CD4-positive, alpha-beta memory T cell (primary cell): ENCODE measurements at regions of chr19 and their contacts with region 1.

Region 1: DNA sequence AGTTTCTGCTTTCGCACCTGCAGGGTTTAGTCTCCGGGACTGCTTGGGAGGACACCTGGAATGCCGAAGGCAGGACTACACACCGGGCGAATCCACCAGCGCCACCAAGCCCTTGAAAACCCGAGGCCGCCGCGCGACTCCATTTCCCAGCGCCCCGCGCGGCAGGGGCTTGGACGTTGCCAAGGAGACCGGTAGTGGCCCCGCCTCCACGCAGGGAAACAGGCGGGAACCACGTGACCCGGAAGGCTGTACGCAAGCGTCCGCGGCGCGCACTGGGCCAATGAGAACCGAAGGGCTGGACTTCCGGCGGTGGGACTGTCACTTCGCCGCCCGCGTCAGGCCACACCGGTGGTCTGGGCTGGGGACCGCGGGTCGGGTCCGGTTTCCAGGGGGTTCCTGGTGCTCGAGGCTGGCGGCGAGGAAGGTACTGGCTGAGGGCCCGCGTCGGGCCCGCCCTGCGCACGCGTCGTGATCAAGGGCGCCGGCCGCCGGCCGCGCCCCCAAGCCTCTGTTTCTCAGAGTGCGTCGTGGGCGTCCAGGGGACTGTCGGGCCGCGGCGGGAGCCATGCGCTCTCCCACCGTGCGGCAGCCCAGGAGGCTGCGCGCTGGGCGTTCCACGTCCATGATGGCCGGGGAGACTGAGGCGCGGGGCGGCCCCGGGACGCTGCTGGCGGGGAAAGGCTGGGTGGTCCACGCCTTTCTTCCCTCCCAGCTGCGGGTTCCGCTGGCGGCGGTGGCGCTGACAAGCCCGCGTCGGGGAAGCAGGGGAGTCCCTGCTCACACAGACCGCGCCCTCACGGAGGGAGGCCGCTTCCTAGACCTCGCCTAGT is at the start of gene ZNF324:
- DNase-seq: peak; percentile 94 to 96 (median 95)
- H3K4me3 ChIP-seq: peak within 1 kb of the TSS; percentile 52 to 83
- H3K4me3 Mint-ChIP-seq: peak within 1 kb of the TSS; percentile 82 to 91 (median 87)
- H3K27ac ChIP-seq: peak within 1 kb of the TSS; percentile 92
- H3K27ac Mint-ChIP-seq: peak within 1 kb of the TSS; percentile 80 to 93 (median 91)
- H3K4me1 ChIP-seq: peaks cover 20% of the 10 kb centered on the region
- H3K4me1 Mint-ChIP-seq: peaks cover 14 to 32% (median 22%) of the 10 kb centered on the region in 4 donors
- H3K27me3 ChIP-seq: no peaks in the 10 kb centered on the region
- H3K27me3 Mint-ChIP-seq: peaks cover 0 to 1% of the 10 kb centered on the region in 2 donors
- total RNA-seq, gene ZNF324: 27.6 TPM

Region 2: GRCh38 chr19:58400916-58401839 is 65.8 kb before region 1 on chr19:
- CTCF ChIA-PET with region 1: no interaction called
- POLR2A ChIA-PET with region 1: no interaction called
- intact Hi-C with region 1: loop called (anchors 1 kb)
- DNase-seq: peak; percentile 98 to 100 (median 99)
- H3K4me3 ChIP-seq: peak overlapping the region; percentile 57 to 59
- H3K4me3 Mint-ChIP-seq: peak overlapping the region; percentile 87 to 97 (median 91)
- H3K27ac ChIP-seq: peak overlapping the region; percentile 74
- H3K27ac Mint-ChIP-seq: peak overlapping the region; percentile 89 to 99 (median 97)
- H3K4me1 ChIP-seq: peaks cover 20% of the 10 kb centered on the region
- H3K4me1 Mint-ChIP-seq: peaks cover 5 to 20% (median 10%) of the 10 kb centered on the region in 4 donors
- H3K27me3 ChIP-seq: peaks cover 8% of the 10 kb centered on the region
- H3K27me3 Mint-ChIP-seq: peaks cover 6 to 9% of the 10 kb centered on the region in 2 donors

Region 3: GRCh38 chr19:58416604-58417003 is 50.4 kb before region 1 on chr19:
- CTCF ChIA-PET with region 1: no interaction called
- POLR2A ChIA-PET with region 1: no interaction called
- intact Hi-C with region 1: no loop called
- DNase-seq: no peak
- H3K4me3 ChIP-seq: no peak overlapping the region
- H3K4me3 Mint-ChIP-seq: no peak overlapping the region
- H3K27ac ChIP-seq: no peak overlapping the region
- H3K27ac Mint-ChIP-seq: no peak overlapping the region
- H3K4me1 ChIP-seq: no peaks in the 10 kb centered on the region
- H3K4me1 Mint-ChIP-seq: peaks cover 0 to 3% (median 1%) of the 10 kb centered on the region in 4 donors
- H3K27me3 ChIP-seq: no peaks in the 10 kb centered on the region
- H3K27me3 Mint-ChIP-seq: no peaks in the 10 kb centered on the region

Region 4: DNA sequence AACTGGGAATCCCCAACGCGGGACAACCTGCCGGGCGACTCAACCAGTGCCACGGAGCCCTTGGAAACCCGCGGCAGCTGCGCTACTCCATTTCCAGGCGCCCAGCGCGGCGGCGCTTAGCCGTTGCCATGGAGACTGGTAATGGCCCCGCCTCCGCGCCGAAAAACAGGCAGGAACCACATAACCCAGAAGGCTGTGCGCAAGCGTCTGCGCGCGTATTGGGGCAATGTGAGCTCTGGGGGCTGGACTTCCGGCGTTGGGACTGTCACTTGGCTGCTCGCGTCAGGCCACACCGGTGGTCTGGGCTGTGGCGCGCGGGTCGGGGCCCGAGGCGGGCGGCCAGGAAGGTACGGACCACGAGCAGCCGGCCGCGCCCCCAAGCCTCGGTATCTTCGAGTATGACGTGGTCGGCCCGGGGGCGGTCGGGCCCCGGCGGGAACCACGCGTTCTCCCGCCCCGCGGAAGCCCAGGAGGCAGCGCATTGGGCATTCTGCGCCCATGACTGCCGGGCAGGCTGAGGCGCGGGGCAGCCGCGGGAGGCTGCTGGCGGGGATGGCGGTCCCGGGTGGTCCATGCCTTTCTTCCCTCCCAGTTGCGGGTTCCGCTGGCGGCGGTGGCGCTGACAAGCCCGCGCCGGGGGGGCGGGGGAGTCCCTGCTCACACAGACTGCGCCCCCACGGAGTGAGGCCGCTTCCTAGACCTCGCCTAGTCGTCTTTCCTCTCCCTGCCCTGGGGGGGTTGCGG is 15.4 kb before region 1 on chr19 and contains the start of gene ZNF324B:
- CTCF ChIA-PET with region 1: interaction called, 4 read pairs
- POLR2A ChIA-PET with region 1: interaction called, 6 read pairs
- intact Hi-C with region 1: loop called (anchors 1 kb)
- DNase-seq: peak; percentile 96 to 97 (median 96)
- H3K4me3 ChIP-seq: peak within 1 kb of the TSS; percentile 60 to 69
- H3K4me3 Mint-ChIP-seq: peak within 1 kb of the TSS; percentile 85 to 93 (median 88)
- H3K27ac ChIP-seq: peak within 1 kb of the TSS; percentile 67
- H3K27ac Mint-ChIP-seq: peak within 1 kb of the TSS; percentile 67 to 93 (median 84)
- H3K4me1 ChIP-seq: peaks cover 7% of the 10 kb centered on the region
- H3K4me1 Mint-ChIP-seq: peaks cover 13 to 31% (median 19%) of the 10 kb centered on the region in 4 donors
- H3K27me3 ChIP-seq: no peaks in the 10 kb centered on the region
- H3K27me3 Mint-ChIP-seq: peaks cover 6 to 11% of the 10 kb centered on the region in 2 donors
- total RNA-seq, gene ZNF324B: 13.1 to 13.7 TPM